Posterior vena cava (tissue), 2 donors: ENCODE measurements at regions of chr1 and their contacts with region 1.

Region 1: DNA sequence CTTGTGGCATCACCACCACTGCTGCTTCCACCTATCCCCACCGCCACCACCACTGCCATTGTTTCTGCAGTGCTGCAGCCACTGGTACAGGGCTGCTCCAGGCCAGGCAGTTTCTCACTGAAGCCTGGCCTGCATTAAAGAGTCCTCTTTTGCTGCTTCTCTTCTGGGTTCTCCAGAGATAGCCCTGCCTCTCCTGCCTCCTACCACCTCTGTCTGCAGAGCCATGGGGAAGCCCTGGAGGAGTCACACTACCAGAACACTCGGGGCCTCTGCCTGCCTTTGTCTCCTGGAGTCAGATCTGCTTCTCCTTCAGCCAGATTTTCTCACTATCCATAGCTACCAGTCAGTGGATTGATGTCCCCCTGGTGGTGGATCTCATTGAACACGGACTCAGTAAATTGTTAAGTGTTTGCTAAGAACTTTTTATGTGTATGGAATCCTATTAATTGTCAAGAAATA is 37.7 kb upstream of the DDAH1 start:
- DNase-seq: no peak

Region 2: GRCh38 chr1:85473390-85473789 is 29.3 kb before region 1 on chr1:
- intact Hi-C with region 1: loop called in 1 of 2 experiments (anchors 1 kb)
- DNase-seq: no peak